ENCODE measurements at regions of chr9 and their contacts with region 1.

Region 1: GRCh38 chr9:121369595-121370265 is at the start of gene STOM:
- DNase-seq: peak; percentile 73 to 95
- H3K4me3 ChIP-seq: peak within 1 kb of the TSS; percentile 69 to 81
- H3K27ac ChIP-seq: peak within 1 kb of the TSS; percentile 96 to 98
- H3K4me1 ChIP-seq: peaks cover 5 to 41% of the 10 kb centered on the region in 2 donors
- H3K27me3 ChIP-seq: no peaks in the 10 kb centered on the region
- CTCF ChIP-seq: no peak
- total RNA-seq, gene STOM: 306 TPM

Region 2: DNA sequence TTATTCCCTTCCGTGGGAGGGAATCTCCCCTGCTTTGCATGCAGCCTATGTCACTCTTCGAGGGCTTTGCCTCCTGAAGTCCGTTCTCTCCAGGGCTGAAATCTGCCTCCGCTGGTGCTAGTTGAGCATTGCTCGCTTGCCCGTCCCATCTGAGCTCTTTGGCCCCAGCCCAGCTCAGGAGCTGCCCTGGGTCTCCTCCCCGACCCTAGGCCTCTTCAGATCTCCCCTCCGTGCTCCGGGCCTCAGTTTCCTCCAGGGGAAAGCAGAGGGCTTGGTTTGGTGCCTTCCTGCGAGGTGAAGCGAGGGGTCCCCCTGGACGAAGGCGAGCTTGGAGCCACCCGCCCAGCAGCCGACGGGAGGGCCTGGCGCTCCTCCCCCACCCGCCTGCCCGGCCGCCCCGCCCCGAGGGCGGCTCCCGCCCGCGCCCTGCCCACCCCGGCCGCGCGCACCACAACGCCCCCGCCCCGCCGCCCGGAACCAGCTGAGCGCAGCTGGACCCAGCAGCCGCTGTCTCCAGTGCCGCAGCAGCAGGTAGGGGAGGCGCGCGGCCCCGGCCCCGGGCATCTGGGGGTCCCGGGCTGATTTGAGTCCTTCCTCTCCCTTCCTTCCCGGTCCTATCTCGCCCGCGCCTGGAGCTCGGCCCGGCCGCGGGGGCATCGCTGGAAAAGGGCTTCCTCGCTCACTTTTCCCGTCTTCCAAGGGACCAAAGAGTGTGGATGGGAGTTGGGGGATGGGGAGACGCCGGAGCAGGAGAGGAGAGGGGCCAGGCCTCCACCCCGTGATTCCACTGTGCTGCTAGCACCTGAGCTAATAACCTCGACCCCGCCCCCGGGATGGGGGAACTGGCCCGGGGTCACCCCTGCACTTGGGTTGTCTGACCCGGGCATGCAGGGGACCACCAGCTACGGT is 101.8 kb before region 1 on chr9 and contains the start of gene GSN:
- intact Hi-C with region 1: loop called (anchors 2 kb)
- DNase-seq: peak in 1 of 2 donors; percentile 91
- H3K4me3 ChIP-seq: peak within 1 kb of the TSS; percentile 90 to 99
- H3K27ac ChIP-seq: peak within 1 kb of the TSS; percentile 98 to 99
- H3K4me1 ChIP-seq: peaks cover 23 to 36% of the 10 kb centered on the region in 2 donors
- H3K27me3 ChIP-seq: no peaks in the 10 kb centered on the region
- CTCF ChIP-seq: peak in 1 of 3 experiments; percentile 33
- total RNA-seq, gene GSN: 3,012 TPM

Region 3: DNA sequence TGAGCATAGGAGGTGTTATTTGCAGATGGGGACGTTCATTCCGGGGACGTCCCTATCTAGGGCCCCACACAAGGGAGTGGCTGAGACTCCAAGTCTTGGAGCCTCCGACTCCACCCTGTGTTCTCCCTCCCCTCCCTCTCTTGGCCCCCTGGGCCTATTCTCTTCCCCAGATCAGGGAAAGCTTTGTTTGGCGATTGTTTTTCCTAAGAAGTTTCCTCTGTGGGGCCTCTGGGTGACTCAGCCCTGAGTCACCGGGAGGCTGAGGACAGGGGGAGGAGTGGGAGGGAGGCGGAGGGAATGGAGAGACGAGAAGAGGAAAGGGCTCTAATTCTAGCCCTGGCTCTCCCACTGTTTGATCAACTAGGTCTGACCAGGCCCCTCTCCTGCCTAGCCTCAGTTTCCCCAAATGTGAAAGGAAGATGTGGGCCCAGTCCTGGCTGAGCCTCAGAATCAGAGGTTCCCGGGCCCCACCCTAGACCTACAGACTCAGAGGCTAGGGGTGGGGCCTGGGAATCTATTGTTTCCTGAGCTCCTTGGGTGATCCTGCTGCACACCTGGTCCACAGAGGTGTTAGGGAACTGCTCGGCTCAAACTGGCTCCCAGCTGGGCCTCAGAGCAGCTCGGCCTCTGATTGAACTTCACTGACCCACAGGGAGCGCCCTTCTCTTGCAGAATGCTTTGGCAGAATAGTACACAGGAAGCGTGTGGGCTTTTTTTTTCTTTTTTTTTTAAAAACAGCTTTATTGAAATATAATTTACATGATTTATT is 82.6 kb before region 1 on chr9:
- intact Hi-C with region 1: loop called (anchors 2 kb)
- DNase-seq: peak; percentile 56 to 95
- H3K4me3 ChIP-seq: peak overlapping the region; percentile 24 to 38
- H3K27ac ChIP-seq: peak overlapping the region; percentile 98 to 99
- H3K4me1 ChIP-seq: peaks cover 66 to 91% of the 10 kb centered on the region in 2 donors
- H3K27me3 ChIP-seq: no peaks in the 10 kb centered on the region
- CTCF ChIP-seq: peak in 2 of 3 experiments; percentile 28 to 29

Region 4: DNA sequence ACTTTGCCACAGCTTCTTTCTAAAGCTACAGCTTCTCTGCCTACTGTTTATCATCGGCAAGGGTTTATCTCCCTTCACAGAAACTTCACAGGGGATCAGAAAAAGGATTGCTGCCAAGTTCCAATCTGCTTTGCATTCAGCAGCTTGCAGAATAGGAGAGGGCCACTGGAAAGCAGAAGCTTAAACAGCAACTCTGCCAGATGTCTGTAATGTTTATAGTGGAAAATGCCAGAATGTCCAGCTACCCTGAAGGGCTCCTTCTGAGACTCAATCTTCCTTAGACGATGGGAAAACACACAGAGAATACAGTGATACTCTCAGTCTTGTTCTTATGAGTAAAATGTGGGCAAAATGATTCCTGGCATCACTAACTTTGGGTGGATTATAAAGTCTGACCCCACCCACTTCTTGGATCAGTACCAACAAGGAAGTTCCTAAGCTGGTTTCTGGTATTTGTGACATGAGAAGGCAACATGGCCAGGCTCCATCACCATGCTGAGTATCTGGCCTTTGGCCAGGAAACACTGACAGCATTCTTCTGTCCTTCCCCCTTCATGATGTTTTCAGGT is 18.7 kb before region 1 on chr9:
- intact Hi-C with region 1: loop called (anchors 1 kb)
- DNase-seq: peak in 1 of 2 donors; percentile 95
- H3K4me3 ChIP-seq: peak overlapping the region in 1 of 2 donors; percentile 23
- H3K27ac ChIP-seq: peak overlapping the region; percentile 76 to 77
- H3K4me1 ChIP-seq: peaks cover 5 to 54% of the 10 kb centered on the region in 2 donors
- H3K27me3 ChIP-seq: no peaks in the 10 kb centered on the region
- CTCF ChIP-seq: no peak

Measured in ascending aorta (tissue), 2 donors.